GM18951 (cell line): ENCODE measurements at regions of chr19 and their contacts with region 1.

Region 1: DNA sequence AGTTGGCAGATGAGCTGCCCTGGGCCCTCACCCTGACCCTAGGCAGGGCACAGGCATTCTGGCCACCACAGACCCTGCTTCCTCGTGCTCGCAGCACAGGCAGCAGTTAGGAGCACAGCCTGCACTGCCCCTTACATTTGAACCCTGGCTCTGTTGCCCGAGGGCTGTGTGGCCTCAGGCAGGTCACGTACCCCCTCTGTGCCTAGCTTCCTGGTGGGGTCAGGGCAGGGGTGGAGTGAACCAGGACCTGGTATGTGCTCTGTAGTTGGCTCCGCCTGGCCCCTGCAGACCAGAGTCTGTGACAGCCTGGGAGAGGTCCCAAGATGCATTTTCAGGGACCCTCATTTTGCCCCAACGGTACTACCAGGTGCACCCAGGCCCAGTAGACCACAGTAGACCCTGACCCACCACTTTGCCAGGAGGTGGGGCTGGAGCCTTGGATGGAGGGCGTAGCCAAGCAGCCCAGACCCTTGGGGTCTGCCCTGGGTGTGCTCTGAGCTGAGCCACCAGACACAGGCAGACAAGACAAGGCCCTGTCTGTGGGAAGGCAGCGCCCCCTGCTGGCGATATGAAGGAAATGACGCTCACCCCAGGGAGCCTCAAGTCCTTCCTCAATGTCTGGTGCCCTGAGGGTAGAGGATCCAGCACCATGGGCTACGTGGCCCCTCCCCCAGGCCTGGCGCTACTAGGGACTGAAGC is 9.1 kb downstream of the LYL1 start:
- POLR2A ChIP-seq: no peak

Region 2: DNA sequence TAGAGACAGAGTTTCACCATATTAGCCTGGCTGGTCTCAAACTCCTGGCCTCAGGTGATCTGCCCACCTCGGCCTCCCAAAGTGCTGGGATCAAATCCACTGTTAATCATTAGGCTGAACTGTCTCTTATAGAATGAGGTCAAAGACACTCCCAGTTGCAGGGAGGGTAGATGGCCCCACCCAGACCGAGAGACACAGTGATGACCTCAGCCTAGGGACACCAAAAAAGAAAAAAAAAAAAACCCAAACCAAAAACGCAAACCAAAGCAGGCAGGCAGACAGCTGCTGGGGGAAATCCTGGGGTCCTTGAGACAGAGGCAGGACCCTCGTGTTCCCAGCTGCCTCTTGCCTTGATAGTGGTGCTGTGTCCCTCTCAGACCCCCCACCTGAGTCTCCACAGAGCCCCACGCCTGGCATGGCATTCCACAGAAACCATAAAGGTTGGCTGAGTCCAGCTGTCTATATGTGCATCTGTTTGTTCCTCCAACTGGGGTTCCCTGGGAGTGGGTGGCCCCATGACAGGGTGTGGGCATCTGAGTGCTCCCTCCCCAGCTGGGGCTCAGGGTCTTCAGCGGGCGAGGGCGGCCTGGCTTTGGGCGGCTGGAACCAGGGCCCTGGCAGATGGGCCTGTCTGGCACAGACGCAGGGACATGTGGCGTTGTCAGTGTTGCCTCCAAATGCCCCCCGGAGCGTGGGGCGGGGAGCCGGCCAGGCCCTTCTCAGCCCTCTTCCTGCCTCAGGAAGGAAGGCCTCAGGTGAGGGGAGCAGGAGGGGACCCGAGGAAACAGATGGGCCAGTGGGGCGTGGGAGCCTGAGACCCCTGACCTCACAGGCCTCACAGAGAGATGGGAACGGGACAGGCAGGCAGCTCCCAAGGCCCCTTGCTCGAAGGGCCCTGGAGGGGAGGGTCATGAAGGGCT is 119.0 kb before region 1 on chr19:
- in situ Hi-C with region 1: loop called (anchors 5 kb)
- POLR2A ChIP-seq: no peak

Region 3: GRCh38 chr19:13033819-13034611 is 59.5 kb before region 1 on chr19:
- in situ Hi-C with region 1: loop called (anchors 5 kb)
- POLR2A ChIP-seq: no peak